ENCODE measurements at regions of chr6 and their contacts with region 1.

Region 1: GRCh38 chr6:134738211-134738900 is 211.5 kb downstream of the ALDH8A1 start:
- DNase-seq: no peak
- ATAC-seq: no peak
- H3K4me3 ChIP-seq: no peak overlapping the region
- H3K27ac ChIP-seq: no peak overlapping the region
- H3K4me1 ChIP-seq: no peaks in the 10 kb centered on the region
- H3K27me3 ChIP-seq: 0 out of 2 replicates have a peak, but pooled peaks cover 4% of the 10 kb centered on the region
- CTCF ChIP-seq: no peak

Region 2: GRCh38 chr6:134822920-134823709 is 84.8 kb after region 1 on chr6:
- CTCF ChIA-PET with region 1: interaction called, 16 read pairs
- POLR2A ChIA-PET with region 1: no interaction called
- in situ Hi-C with region 1: no loop called
- intact Hi-C with region 1: no loop called
- DNase-seq: peak; percentile 85
- ATAC-seq: peak; percentile 100
- H3K4me3 ChIP-seq: no peak overlapping the region
- H3K27ac ChIP-seq: no peak overlapping the region
- H3K4me1 ChIP-seq: no peaks in the 10 kb centered on the region
- H3K27me3 ChIP-seq: no peaks in the 10 kb centered on the region
- CTCF ChIP-seq: peak; percentile 93

Region 3: DNA sequence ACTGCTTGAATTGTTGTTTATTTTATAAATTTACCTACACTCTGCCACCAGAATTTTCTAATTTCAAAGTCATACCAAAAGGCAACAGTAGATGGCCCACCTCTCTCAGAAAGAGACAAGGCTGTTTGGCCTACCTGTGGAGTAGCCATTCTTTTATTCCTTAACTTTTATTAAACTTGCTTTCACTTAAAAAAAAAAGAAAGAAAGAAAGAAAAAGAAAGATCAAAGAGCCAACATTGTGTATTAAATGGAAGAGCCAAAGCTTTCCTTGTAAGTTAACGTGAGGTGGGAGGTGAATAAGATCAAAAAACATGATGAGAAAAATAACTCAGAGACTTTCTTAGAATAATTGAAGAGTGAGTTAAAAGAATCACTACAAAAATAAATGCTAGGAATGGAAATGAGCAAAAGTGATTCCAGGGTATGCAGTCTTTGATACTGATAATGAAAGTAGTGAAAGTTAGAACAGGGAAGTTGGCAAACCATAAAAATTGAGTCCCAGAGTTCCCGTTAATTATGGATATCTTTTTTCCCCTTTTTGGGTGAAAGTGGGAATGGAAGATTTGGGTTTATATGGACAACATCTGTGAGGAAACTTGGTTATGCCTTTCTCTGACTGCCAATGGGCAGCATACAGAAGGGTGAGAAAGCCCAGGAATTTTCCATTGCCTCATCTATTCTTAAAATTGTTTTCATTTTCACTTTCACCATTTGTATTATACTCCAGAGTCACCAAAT is 406.9 kb after region 1 on chr6:
- CTCF ChIA-PET with region 1: no interaction called
- POLR2A ChIA-PET with region 1: no interaction called
- in situ Hi-C with region 1: no loop called
- intact Hi-C with region 1: no loop called
- DNase-seq: no peak
- ATAC-seq: no peak
- H3K4me3 ChIP-seq: no peak overlapping the region
- H3K27ac ChIP-seq: no peak overlapping the region
- H3K4me1 ChIP-seq: no peaks in the 10 kb centered on the region
- H3K27me3 ChIP-seq: 0 out of 2 replicates have a peak, but pooled peaks cover 3% of the 10 kb centered on the region
- CTCF ChIP-seq: peak; percentile 67; the same call in 1 of the 2 replicates